PC-3 (cell line): ENCODE measurements at regions of chr13 and their contacts with region 1.

Region 1: DNA sequence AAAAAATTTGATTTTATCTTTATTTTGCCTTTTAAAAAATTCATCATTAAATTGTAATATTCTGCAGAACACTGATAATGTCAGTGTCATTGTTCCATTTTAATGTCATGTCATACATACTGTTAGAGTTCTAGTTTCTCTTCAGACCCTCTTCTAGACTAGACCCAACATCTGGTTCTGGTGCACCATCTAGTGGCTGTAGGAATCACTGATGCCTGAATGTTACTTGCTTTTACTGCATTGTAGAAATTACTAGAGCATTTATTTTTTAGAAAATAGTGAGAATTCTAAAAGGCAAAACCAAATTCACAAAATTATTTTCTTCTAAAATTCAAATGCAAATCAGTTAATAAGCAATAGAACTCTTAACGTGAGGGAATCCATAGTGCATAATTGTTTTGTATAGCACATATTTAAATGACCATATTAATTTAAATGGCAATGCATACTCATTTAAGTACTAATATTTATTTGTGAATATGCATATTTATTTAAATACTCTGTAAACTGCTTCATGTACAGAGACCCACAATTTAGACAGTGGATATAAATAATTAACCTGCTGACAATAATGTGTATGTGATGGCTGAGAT is 425.7 kb downstream of the KLF12 start:
- DNase-seq: peak; percentile 77
- ATAC-seq: peak; percentile 81
- H3K4me3 ChIP-seq: no peak overlapping the region
- H3K27ac ChIP-seq: peak overlapping the region; percentile 54; the same call in 1 of the 2 replicates
- H3K4me1 ChIP-seq: no peaks in the 10 kb centered on the region
- H3K27me3 ChIP-seq: no peaks in the 10 kb centered on the region
- CTCF ChIP-seq: peak; percentile 89

Region 2: DNA sequence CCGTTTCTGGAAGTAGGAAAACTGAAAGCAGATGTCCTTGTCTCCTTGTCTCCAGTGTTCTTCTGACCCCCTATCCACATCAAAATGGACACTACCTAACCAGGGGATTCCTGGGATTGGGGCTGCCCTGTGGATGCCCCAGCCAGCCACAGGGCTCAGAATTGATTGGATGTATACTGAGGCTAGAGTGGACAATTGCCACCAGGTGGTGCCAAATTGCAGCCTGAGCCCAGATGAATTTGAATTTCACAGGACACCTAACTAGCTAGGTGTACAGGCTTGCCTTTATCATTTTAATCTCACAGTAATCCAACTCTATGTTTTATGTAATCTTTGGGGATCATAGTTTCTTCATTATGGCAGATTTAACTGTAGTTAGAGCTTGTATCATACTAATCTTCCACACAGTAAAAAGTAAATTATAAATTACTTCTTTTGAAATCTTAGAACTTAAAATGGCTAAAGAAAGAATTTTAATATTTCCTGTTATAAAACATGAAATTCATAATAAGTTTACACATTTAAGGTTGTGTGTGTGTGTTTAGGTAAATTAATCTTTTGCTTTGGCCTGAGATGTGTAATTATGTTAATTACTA is 868.6 kb before region 1 on chr13:
- CTCF ChIA-PET with region 1: no interaction called
- POLR2A ChIA-PET with region 1: no interaction called
- intact Hi-C with region 1: loop called (anchors 1 kb)
- DNase-seq: peak; percentile 74
- ATAC-seq: peak; percentile 92
- H3K4me3 ChIP-seq: no peak overlapping the region
- H3K27ac ChIP-seq: no peak overlapping the region
- H3K4me1 ChIP-seq: no peaks in the 10 kb centered on the region
- H3K27me3 ChIP-seq: no peaks in the 10 kb centered on the region
- CTCF ChIP-seq: peak; percentile 84

Region 3: DNA sequence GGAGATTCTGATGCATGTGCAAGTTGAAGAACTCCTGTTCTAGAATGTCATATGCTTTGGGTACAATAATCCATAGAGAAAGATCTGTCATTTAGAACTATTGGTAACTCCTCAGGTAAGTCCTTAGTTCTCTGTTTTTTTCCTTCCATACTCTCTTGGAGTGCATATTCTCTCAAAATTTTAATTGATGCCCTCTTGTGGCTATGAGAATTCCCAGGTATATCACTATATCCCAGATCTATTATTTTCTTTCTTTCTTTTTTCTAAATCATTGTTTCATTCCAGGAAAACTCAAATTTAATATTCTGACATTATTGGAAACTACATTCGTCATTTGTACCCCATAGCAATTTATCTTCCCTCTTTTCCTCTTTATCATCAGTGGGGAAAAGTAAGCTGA is 164.3 kb before region 1 on chr13:
- CTCF ChIA-PET with region 1: no interaction called
- POLR2A ChIA-PET with region 1: no interaction called
- intact Hi-C with region 1: loop called (anchors 5 kb)
- DNase-seq: peak; percentile 27
- ATAC-seq: peak; percentile 57; the same call in 1 of the 2 replicates
- H3K4me3 ChIP-seq: no peak overlapping the region
- H3K27ac ChIP-seq: peak overlapping the region; percentile 1; the same call in 1 of the 2 replicates
- H3K4me1 ChIP-seq: peaks cover 10% of the 10 kb centered on the region; the same call in 1 of the 2 replicates
- H3K27me3 ChIP-seq: no peaks in the 10 kb centered on the region
- CTCF ChIP-seq: peak; percentile 50

Region 4: DNA sequence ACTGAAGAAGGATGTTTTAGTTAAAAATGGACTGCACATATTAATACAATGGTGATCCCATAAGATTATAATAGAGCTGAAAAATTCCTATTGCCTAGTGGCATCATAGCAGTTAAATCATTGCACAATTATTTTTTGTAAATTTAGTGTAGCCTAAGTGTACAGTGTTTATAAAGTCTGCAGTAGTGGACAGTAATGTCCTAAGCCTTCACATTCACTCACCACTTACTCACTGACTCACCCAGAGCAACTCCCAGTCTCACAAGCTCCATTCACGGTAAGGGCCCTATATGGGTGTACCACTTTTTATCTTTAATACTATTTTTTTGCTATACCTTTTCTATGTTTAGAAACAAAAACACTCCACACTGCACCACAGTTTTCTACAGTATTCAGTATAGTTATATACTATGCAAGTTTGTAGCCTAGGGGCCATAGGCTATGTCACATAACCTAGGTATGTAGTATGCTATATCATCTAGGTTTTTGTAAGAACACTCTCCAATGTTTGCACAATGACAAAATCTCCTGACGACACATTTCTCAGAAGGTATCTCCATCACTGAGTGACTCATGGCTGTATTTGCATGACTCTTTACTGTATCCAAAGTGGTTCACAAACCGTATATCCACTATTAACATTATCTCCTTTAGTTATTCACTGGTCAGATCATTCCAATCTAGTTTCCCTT is 110.3 kb before region 1 on chr13:
- CTCF ChIA-PET with region 1: no interaction called
- POLR2A ChIA-PET with region 1: no interaction called
- intact Hi-C with region 1: loop called (anchors 5 kb)
- DNase-seq: peak; percentile 93
- ATAC-seq: peak; percentile 88
- H3K4me3 ChIP-seq: no peak overlapping the region
- H3K27ac ChIP-seq: peak overlapping the region; percentile 99
- H3K4me1 ChIP-seq: peaks cover 49% of the 10 kb centered on the region
- H3K27me3 ChIP-seq: no peaks in the 10 kb centered on the region
- CTCF ChIP-seq: no peak

Region 5: DNA sequence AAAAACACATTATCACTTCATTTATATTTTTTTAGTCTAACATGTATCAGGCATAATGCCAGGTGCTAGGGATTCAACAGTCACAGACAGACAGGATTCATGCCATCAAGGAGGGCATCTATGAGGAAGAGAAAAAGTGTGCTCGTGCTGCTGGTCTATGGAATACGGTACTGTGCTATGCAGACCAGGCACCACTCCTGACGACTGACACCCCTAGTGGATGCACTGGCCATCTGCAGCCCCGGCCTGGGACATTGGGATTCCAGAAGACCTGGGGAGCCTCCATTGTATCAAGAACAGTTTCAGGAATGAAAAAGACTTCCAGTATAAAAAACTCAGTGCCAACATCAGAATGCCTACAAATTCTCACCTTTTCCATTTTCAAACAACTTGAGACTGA is 331.7 kb after region 1 on chr13:
- CTCF ChIA-PET with region 1: no interaction called
- POLR2A ChIA-PET with region 1: no interaction called
- intact Hi-C with region 1: no loop called
- DNase-seq: peak; percentile 31
- ATAC-seq: peak; percentile 53; the same call in 1 of the 2 replicates
- H3K4me3 ChIP-seq: no peak overlapping the region
- H3K27ac ChIP-seq: no peak overlapping the region
- H3K4me1 ChIP-seq: peaks cover 17% of the 10 kb centered on the region
- H3K27me3 ChIP-seq: no peaks in the 10 kb centered on the region
- CTCF ChIP-seq: peak; percentile 58